OCI-LY7 (cell line): ENCODE measurements at regions of chr2 and their contacts with region 1.

Region 1: DNA sequence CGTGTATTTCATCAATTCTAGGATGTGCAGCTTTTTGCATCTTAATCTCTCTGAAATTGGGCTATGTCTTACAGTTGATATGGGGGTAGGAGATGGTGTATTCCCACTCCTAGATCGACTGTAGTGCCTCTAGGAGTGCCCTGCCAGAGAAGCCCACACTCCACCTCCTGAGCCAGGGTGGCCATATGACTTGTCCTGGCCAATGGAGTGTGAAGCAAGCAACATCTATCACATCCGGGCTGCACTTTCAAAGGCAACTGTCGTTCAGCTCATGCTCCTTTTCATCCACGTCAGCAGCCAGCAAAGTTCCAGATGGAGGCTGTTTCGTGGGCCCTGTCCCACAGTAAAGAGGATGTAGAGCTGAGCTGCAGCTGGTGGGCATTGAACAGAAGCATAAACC is 149.4 kb upstream of the SLC1A4 start:
- DNase-seq: peak; percentile 91
- H3K4me3 ChIP-seq: peak overlapping the region; percentile 5
- H3K27ac ChIP-seq: peak overlapping the region; percentile 83
- H3K4me1 ChIP-seq: peaks cover 45% of the 10 kb centered on the region
- CTCF ChIP-seq: no peak

Region 2: DNA sequence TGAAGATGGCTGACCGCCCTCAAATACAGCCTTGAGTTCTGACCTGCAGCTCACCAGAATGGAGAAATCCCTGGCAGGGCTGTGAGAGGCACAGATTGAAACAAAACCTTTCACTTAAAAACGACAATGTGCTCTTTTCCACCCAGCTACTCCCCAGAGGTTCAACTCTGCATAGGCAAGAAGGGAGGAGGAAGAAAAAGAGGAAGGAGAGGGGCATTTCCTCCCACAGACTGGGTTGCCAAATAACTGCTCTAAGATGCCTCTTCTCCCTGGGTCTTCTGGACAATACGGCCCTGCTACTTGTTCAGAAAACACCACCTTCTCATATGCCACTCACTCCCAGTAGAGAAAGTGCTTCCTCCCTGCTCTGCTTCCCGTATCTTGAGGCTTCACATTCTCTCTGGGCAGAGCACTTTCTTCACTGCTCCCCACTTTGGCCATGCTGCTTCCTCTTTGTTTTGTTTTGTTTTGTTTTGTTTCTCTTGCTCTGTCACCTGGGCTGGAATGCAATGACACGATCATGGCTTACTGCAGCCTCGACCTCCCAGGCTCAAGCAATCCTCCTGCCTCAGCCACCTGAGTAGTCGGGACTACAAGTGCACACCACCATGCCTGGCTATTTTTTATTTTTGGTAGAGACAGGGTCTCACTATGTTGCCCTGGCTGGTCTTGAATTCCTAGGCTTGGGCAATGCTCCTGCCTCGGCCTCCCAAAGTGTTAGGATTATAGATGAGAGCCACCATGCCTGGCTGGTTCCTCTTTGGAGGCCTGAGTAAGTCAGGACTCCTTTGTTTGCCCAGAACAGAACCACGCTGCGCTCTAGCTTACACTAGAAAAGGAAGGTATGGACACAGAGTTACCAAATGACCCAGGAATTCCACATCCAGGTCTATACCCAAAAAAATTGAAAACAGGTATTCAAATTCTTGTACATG is 13.2 kb after region 1 on chr2:
- CTCF ChIA-PET with region 1: no interaction called
- POLR2A ChIA-PET with region 1: interaction called, 21 read pairs
- intact Hi-C with region 1: no loop called
- DNase-seq: peak; percentile 60
- H3K4me3 ChIP-seq: peak overlapping the region; percentile 37
- H3K27ac ChIP-seq: peak overlapping the region; percentile 38
- H3K4me1 ChIP-seq: peaks cover 29% of the 10 kb centered on the region
- CTCF ChIP-seq: no peak

Region 3: GRCh38 chr2:64859312-64860212 is 19.7 kb after region 1 on chr2:
- CTCF ChIA-PET with region 1: interaction called, 4 read pairs
- POLR2A ChIA-PET with region 1: interaction called, 12 read pairs
- intact Hi-C with region 1: no loop called
- DNase-seq: no peak
- H3K4me3 ChIP-seq: peak overlapping the region; percentile 17
- H3K27ac ChIP-seq: peak overlapping the region; percentile 12
- H3K4me1 ChIP-seq: peaks cover 66% of the 10 kb centered on the region
- CTCF ChIP-seq: no peak